GM18951 (cell line): ENCODE measurements at regions of chr5 and their contacts with region 1.

Region 1: GRCh38 chr5:154077696-154078095 is 38.9 kb downstream of the MFAP3 start:
- POLR2A ChIP-seq: no peak

Region 2: GRCh38 chr5:152514827-152515397 is 1562.8 kb before region 1 on chr5:
- in situ Hi-C with region 1: no loop called
- POLR2A ChIP-seq: no peak

Region 3: DNA sequence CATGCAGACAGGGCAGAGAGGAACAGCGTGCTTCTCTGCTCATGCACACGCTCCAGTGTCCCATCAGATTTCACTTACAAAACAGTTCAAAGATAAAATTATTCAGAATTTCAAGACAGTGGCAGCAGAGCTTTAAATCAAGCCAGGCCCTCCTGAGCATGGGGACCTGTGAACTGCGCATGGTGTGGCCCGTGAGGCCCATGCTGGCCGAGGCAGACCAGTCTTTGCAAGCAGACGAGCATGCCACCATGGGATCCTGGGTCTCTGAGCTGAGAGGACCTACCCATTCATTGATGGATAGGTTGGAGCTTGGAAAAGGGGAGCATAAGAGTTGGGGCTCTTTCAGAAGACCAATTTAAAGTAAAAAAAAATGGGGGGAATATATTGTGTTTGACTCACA is 333.1 kb after region 1 on chr5:
- in situ Hi-C with region 1: loop called (anchors 5 kb)
- POLR2A ChIP-seq: no peak